ENCODE measurements at regions of chr1 and their contacts with region 1.

Region 1: GRCh38 chr1:116226017-116226416 is 114.8 kb downstream of the MAB21L3 start:
- DNase-seq: peak; percentile 12
- H3K4me3 ChIP-seq: no peak overlapping the region
- H3K27ac ChIP-seq: no peak overlapping the region
- H3K4me1 ChIP-seq: no peaks in the 10 kb centered on the region
- H3K27me3 ChIP-seq: no peaks in the 10 kb centered on the region
- CTCF ChIP-seq: no peak

Region 2: GRCh38 chr1:115877511-115877910 is 348.5 kb before region 1 on chr1:
- CTCF ChIA-PET with region 1: no interaction called
- dilution Hi-C with region 1: no loop called
- in situ Hi-C with region 1: no loop called
- intact Hi-C with region 1: no loop called
- DNase-seq: peak; percentile 89
- H3K4me3 ChIP-seq: no peak overlapping the region
- H3K27ac ChIP-seq: no peak overlapping the region
- H3K4me1 ChIP-seq: peaks cover 28% of the 10 kb centered on the region
- H3K27me3 ChIP-seq: no peaks in the 10 kb centered on the region
- CTCF ChIP-seq: peak in 1 of 2 donors; percentile 5

Region 3: GRCh38 chr1:116172666-116173065 is 53.4 kb before region 1 on chr1:
- CTCF ChIA-PET with region 1: no interaction called
- dilution Hi-C with region 1: loop called (anchors 5 kb)
- in situ Hi-C with region 1: no loop called
- intact Hi-C with region 1: no loop called
- DNase-seq: no peak
- H3K4me3 ChIP-seq: no peak overlapping the region
- H3K27ac ChIP-seq: no peak overlapping the region
- H3K4me1 ChIP-seq: peaks cover 7% of the 10 kb centered on the region
- H3K27me3 ChIP-seq: no peaks in the 10 kb centered on the region
- CTCF ChIP-seq: no peak

Measured in mammary epithelial cell (primary cell).